ENCODE measurements at regions of chr2 and their contacts with region 1.

Region 1: DNA sequence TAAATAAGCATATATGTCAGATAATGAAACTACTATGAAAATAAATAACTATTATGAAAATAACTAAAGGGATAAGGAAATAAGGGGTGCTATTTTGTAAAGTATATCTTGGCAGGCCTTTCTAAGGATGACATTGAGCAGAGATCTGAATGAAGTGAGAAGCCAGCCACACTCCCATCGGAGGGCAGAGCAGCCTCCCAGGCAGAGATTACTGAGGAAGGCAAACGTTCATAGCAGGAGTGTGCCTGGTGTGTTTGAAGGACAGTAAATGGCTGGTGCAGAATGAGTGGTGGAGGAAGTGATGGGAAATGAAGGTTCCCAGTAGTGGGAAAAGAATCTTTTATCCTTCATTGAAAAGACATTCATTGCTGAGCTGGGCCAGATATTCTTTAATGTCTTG is 62.5 kb downstream of the SPHKAP start:
- DNase-seq: no peak
- H3K4me3 ChIP-seq: no peak overlapping the region
- H3K27ac ChIP-seq: no peak overlapping the region
- H3K4me1 ChIP-seq: peaks cover 6% of the 10 kb centered on the region
- H3K27me3 ChIP-seq: no peaks in the 10 kb centered on the region
- CTCF ChIP-seq: no peak

Region 2: GRCh38 chr2:228015741-228016140 is 103.2 kb before region 1 on chr2:
- CTCF ChIA-PET with region 1: interaction called, 11 read pairs
- POLR2A ChIA-PET with region 1: no interaction called
- intact Hi-C with region 1: no loop called
- DNase-seq: no peak
- H3K4me3 ChIP-seq: no peak overlapping the region
- H3K27ac ChIP-seq: no peak overlapping the region
- H3K4me1 ChIP-seq: no peaks in the 10 kb centered on the region
- H3K27me3 ChIP-seq: no peaks in the 10 kb centered on the region
- CTCF ChIP-seq: no peak

Region 3: GRCh38 chr2:228140934-228141528 is 22.1 kb after region 1 on chr2:
- CTCF ChIA-PET with region 1: no interaction called
- POLR2A ChIA-PET with region 1: no interaction called
- intact Hi-C with region 1: no loop called
- DNase-seq: no peak
- H3K4me3 ChIP-seq: no peak overlapping the region
- H3K27ac ChIP-seq: no peak overlapping the region
- H3K4me1 ChIP-seq: no peaks in the 10 kb centered on the region
- H3K27me3 ChIP-seq: no peaks in the 10 kb centered on the region
- CTCF ChIP-seq: no peak